Cardiac septum (tissue), 1 donor: ENCODE measurements at regions of chr19 and their contacts with region 1.

Region 1: DNA sequence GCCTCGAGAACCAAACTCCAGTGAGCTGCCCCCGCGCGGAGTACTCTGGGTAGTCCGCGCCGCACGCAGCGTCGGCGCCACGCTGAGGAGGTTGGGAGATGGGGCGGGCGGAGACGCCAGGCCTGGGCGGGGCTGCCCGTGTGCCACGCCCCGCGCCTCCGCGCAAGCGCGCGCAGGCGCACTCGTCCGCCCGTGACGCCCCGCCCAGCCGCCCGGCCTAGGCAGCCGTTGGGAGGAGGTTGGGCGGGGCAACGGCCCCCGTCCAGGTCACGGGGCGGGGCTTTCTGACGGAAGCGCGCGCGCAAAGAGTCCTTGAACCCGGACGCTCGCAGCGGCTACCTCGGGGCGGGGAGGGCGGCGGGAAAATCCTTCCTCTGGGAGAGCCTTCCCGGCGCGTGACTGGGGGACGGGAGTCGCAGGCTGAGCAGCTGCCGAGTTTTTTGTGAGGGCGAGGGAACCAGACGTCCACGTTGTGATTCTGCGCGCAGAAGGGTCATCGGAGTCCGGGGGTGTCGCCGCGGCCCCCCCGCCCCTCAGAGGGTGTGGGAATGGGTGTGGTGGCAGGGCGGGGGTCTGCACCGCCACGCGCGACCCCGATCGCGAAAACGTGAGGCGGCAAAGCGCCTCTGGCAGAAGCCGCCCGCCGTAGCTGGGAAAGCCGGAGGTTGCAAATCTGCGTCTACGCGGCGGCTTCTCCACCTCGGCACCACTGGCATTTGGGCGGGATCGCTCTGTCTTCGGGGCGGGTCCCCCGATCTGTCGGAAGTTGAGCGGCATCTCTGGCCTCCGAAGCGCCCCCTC is at the start of gene MED26:
- DNase-seq: peak; percentile 99
- total RNA-seq, gene MED26: 4.3 TPM

Region 2: GRCh38 chr19:16542045-16542909 is 86.1 kb before region 1 on chr19 and contains the start of gene CHERP:
- intact Hi-C with region 1: loop called (anchors 1 kb)
- DNase-seq: peak; percentile 97
- total RNA-seq, gene CHERP: 23.7 TPM

Region 3: DNA sequence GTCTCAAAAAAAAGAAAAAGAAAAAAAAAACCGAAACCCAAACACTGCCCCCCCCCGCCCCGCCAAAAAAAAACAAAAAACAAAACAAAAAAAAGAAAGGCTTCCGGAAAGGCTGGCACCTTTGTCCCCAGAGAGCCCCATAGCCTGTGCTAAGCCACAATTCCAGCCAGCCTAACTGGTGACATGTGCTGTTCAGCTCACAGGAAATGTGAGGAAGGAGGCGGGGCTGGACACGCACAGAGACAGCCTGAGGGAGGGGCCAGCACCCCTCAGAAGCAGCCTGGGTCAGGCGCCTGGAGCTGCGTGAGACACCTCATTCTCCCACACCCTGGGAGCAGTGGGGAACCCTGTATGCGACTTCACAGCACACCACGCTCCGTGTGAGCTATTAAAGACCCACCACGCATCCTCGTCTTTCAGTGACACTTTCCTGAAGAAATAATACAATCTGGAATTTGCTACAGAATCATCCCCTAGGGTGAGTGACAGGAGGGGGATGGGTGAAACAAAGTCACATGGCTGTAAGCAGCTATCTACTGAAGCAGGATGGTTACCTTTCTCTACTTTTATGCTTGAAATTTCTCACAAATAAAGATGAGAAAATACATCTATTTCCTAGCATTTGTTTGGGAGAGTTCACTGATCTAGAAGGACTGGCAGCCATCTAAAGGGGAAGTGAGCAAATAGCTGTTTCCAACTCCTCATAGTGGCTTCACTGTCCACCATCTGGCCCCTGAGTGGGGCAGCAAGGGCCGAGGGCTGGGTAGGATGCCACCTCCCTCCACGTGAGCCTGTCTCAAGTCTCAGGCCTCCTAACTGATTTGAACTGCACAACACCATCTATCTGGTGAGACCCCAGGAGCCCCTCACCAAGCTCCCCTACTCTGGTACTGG is 43.9 kb before region 1 on chr19:
- intact Hi-C with region 1: loop called (anchors 5 kb)
- DNase-seq: peak; percentile 88

Region 4: GRCh38 chr19:16595097-16595496 is 33.3 kb before region 1 on chr19:
- intact Hi-C with region 1: no loop called
- DNase-seq: no peak

Region 5: DNA sequence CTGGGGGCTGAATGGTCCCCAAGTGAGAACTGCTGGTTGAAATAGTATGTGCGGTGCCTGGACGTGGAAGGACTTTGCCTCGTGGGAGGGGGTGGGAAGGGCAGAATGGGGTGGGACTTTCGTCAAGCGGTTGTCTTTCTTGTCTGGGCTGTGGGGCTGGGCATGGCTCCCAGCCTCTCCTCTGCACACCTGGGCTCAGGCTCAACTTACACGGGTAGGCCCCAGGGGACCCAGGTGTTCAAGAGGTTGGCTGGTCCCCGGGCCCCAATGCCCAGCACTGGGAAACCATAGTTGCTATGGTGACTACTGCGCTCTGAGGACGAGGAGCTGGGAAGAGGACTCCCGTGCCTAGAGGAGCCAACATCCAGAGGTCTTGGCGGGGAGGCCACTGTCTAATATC is 98.5 kb after region 1 on chr19:
- intact Hi-C with region 1: no loop called
- DNase-seq: no peak

Region 6: GRCh38 chr19:16988661-16989060 is 360.3 kb after region 1 on chr19:
- intact Hi-C with region 1: no loop called
- DNase-seq: no peak